ENCODE measurements at regions of chr2 and their contacts with region 1.

Region 1: GRCh38 chr2:178280244-178280852 is 86.0 kb downstream of the OSBPL6 start:
- DNase-seq: no peak

Region 2: DNA sequence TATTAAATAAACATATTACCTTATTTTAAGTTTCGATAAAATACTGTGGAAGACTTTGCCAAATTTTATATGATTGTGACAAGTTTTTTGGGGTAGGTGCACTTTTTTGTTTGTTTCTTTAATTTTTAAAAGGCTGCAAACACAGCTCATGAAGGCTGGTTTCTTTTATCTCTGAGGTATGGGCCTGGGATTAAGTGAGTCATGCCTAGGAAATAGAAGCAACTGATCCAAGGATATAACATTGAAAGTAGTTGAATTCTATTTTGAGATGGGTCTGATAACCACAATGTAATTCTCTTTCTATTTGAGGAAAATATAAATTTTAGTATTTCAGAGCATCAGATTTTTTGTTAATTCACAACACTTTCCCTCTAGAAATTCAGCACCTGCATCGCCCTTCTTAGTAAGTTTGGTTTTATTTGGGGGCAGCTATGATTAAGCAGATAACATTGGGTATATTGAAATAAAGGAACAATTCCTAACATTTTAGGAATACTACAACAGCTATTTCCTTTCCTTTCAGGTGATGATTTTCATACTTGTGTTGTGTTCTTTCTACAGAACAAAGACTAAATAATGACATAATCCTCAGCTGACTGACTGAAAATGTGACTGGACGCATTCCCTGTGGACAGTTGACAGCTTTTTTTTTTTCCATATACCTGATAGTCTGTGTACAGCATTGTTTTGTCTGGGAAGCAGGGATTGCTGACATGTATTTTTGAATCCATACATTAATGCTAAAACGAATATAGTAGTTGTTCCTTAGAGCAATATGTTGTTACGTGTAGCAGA is 151.3 kb before region 1 on chr2:
- intact Hi-C with region 1: loop called (anchors 2 to 5 kb)
- DNase-seq: no peak

Region 3: DNA sequence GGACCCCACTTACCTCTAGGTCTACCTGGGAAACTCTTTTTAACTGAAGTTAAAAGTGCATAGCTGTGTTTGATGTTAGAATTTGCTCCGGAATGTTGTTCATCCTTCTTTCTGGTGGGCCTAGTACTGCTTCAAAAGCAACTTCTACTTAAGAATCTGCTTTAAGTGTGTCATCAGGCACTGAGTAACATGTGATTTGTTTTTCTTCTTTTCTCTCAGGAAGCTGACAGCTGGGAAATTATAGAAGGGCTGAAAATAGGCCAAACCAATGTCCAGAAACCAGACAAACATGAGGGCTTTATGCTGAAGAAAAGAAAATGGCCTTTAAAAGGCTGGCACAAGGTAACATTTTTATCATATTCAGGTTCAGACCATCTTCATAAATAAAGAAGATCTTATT is 47.7 kb after region 1 on chr2:
- intact Hi-C with region 1: loop called in 1 of 2 experiments (anchors 2 kb)
- DNase-seq: no peak

Region 4: DNA sequence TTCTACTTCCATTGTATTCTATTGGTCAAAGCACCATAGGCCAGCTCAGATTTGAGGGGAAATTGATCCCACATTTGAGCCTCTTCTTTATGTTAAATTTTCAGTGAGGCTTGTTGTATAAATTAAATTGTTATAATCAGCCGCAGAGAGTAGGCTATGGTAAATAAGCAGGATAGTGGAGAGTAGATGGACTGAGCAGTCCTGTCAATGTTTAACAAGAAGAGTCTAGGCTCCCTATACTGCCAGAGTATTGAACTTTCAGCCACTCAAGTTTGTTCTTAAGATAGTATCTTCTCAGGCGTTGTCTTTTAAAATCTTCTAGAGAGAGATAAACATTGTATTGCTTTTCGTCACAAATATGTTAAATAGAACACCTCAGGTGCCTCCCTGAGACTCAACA is 69.7 kb after region 1 on chr2:
- intact Hi-C with region 1: no loop called
- DNase-seq: no peak

Measured in posterior vena cava (tissue), 2 donors.